Right ventricle myocardium inferior (tissue), 1 donor: ENCODE measurements at regions of chr14 and their contacts with region 1.

Region 1: GRCh38 chr14:99415496-99416281 is 65.0 kb downstream of the SETD3 start:
- DNase-seq: no peak
- ATAC-seq: peak; percentile 84

Region 2: GRCh38 chr14:99320105-99320572 is 95.5 kb before region 1 on chr14:
- intact Hi-C with region 1: loop called (anchors 10 kb)
- DNase-seq: no peak
- ATAC-seq: peak; percentile 61